Left cardiac atrium (tissue), 4 donors: ENCODE measurements at regions of chr15 and their contacts with region 1.

Region 1: GRCh38 chr15:101501703-101502373 is 12.3 kb upstream of the PCSK6 start:
- DNase-seq: peak; percentile 57
- ATAC-seq: peak; percentile 53 to 63

Region 2: GRCh38 chr15:101294731-101295606 is 206.9 kb before region 1 on chr15 and contains the start of gene SNRPA1:
- intact Hi-C with region 1: loop called in 1 of 2 experiments (anchors 2 kb)
- DNase-seq: peak; percentile 99
- ATAC-seq: peak; percentile 95 to 96
- total RNA-seq, gene SNRPA1: 26.7 to 36.7 TPM

Region 3: DNA sequence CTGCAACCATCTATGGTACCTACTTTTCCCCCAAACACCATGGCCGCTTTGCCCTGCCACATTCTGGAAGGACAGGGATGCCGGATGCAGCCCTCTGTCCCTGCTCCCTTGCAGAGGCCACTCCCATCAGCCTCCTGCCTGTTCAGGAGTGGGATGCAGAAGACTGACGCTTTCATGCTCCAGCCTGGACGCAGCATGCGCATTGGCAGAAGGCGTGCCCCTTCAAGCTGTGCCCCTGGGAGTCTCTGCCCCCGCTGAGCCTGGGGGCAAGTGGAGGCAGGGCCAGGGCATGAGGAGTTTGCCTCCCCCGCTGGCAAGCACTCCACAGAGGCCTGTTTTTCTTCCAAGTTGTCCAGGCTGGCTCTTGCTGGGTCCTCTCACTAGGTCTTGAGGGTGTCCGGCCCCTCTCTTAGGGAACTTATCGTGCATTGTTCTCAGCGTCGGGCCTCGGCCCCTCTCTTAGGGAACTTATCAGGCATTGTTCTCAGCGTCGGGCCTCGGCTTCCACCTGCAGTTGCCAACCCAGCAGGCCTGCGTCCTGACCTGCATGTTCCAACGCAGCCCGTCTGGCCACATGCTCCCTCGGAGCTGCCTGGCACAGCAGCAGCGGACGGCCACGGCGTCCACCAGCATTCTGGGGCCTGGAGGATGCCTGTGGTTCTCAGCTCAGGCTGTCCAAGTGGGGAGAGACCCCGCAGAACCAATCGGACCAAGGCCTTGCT is 192.2 kb before region 1 on chr15:
- intact Hi-C with region 1: loop called in 1 of 2 experiments (anchors 10 kb)
- DNase-seq: no peak
- ATAC-seq: no peak

Region 4: DNA sequence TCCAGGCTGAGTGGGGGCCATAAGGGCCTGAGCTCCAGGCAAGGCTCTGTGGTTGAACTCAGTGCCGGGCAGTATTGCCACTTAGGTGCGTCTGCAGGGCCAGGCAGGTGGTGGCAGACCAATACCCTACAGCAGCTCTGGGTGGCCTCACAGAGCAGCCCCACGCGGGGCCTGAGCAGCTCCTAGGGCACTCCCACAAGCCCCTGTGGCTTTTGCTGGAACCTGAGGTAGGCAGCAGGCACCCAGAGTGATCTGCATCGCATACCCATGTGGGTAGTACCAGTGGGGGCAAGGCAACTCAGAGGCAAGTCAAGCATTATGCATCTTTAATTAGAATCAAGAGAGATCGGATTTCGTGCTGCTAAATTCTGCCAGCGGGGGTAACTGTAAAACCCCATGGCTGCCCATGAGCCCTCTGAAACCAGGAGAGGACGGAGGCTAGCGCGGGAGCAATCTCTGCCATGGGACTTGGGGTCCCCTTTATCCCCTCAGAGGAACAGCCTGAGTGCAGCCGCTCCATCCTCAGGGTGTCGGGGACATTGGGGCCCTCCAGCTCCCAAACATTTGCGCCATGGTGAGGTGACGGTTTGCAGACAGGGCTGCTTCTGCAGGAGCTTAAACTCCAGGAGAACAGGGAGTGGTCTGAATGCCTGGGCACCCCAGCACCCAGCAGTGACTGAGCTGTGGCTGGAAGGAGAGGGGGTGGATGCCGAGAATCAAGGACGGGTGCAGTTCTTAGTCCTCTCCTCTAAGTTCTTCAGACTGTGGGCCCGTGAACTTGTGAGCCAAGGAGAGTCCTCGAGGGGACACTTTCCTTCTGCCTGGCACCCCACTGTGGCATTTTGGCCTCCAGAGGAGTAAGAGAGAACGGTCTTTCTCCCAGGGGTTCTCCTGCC is 50.1 kb after region 1 on chr15:
- intact Hi-C with region 1: no loop called
- DNase-seq: no peak
- ATAC-seq: no peak